Activated B cell treated with CpG ODN at 0.5 μM for 24 hours (primary cell): ENCODE measurements at regions of chr6 and their contacts with region 1.

Region 1: DNA sequence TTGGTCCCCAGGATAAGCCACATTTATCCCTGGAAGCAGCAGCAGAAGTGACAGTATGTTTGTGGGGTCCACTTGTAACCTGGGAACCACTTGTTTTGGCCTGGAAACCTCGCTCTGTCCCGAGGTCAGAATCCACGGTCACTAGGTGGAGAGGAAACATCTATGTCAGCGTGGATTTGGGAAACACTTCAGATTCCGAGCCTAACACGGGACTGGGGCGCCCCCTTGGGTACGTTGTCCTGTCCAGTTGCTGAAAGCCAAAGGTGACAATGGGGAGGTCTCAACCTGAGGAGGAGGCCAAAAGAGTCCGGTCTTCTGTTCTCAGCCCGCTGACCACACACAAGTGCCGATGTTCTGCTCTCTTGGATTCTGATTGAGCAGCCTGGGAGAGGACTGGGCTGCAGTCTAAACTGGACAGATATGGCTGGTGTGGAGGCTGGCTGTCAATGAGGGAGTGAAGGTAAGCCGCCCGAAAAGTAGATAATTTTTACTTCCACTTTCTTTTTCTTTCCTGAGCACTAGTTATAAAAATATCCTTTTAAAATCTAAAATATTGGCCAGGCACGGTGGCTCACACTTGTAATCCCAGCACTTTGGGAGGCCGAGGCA is 4.9 kb upstream of the ZFP57 start:
- DNase-seq: no peak
- ATAC-seq: no peak
- H3K4me3 Mint-ChIP-seq: no peak overlapping the region
- H3K27ac Mint-ChIP-seq: no peak overlapping the region
- H3K4me1 Mint-ChIP-seq: peaks cover 4% of the 10 kb centered on the region
- H3K27me3 Mint-ChIP-seq: peaks cover 2% of the 10 kb centered on the region
- CTCF ChIP-seq: no peak

Region 2: DNA sequence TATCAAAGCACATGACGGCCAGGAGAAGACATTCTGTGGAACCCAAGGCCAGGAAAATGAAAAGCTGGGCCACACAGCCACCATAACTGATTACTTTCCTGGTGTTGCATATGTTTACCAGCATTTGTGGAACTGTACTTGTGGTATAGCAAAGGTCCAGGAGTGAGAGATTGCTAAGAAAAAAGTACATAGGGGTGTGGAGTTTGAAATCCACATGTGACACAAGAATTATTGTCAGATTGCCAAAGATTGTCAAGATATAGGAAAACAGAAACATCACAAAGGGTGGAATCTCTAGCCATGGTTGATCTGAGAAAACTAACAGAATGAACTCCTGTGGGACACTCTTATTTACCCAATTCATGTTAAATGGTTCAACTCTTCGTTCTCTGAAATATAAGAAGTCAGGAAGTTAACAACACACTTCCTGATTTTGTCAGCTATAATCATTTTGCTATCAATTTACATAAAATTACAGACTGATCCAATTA is 1773.8 kb before region 1 on chr6 and contains the start of gene OR2B2:
- CTCF ChIA-PET with region 1: no interaction called
- POLR2A ChIA-PET with region 1: no interaction called
- intact Hi-C with region 1: no loop called
- DNase-seq: no peak
- ATAC-seq: no peak
- H3K4me3 Mint-ChIP-seq: no peak within 1 kb of the TSS
- H3K27ac Mint-ChIP-seq: no peak within 1 kb of the TSS
- H3K4me1 Mint-ChIP-seq: no peaks in the 10 kb centered on the region
- H3K27me3 Mint-ChIP-seq: no peaks in the 10 kb centered on the region
- CTCF ChIP-seq: no peak
- total RNA-seq, gene OR2B2: not detected in 2 replicates

Region 3: DNA sequence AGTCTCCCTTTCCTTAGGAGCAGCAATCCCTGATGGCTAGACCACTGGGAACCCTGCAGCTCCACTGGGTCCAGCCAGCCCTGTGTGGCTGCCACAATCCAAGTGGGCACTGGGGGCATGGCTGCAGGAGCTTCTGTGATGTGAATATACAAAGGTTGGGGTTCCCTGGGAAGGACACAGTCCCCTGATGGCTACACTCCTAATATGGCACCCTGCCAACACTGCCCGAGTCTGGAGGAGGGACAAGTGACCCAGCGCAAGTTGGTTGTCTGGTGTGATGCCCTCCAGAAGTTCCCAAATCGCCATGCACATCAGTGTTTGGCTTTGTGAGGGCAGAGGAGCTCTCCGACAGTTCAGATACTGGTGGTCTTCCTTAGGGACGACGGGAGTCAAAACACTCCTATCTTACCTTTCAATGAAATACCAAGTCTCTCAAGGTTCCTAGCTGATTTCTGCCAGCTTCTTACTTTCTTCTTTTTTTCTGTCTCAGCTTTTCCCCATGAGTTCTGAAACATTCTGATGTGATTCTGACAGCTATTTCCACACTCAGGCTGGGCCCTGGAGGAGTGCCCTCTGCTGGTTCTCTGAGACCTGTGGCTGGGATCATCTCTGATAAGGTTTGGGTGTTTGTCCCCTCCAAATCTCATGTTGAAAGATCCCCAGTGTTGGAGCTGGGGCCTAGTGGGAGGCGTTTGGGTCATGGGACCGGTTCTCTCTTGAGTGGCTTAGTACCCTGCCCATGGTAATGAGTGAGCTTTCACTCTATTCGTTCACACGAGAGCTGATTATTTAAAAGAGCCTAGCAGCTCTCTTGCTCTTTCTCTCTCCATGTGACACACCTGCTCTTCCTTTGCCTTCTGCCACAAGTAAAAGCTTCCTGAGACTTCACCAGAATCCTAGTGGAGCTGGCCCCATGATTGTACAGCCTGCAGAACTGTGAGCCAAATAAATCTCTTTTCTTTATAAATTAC is 10.6 kb after region 1 on chr6:
- CTCF ChIA-PET with region 1: no interaction called
- POLR2A ChIA-PET with region 1: interaction called, 10 read pairs
- intact Hi-C with region 1: no loop called
- DNase-seq: no peak
- ATAC-seq: peak; percentile 42
- H3K4me3 Mint-ChIP-seq: no peak overlapping the region
- H3K27ac Mint-ChIP-seq: no peak overlapping the region
- H3K4me1 Mint-ChIP-seq: peaks cover 4% of the 10 kb centered on the region
- H3K27me3 Mint-ChIP-seq: peaks cover 5% of the 10 kb centered on the region
- CTCF ChIP-seq: no peak